ENCODE measurements at regions of chr13 and their contacts with region 1.

Region 1: DNA sequence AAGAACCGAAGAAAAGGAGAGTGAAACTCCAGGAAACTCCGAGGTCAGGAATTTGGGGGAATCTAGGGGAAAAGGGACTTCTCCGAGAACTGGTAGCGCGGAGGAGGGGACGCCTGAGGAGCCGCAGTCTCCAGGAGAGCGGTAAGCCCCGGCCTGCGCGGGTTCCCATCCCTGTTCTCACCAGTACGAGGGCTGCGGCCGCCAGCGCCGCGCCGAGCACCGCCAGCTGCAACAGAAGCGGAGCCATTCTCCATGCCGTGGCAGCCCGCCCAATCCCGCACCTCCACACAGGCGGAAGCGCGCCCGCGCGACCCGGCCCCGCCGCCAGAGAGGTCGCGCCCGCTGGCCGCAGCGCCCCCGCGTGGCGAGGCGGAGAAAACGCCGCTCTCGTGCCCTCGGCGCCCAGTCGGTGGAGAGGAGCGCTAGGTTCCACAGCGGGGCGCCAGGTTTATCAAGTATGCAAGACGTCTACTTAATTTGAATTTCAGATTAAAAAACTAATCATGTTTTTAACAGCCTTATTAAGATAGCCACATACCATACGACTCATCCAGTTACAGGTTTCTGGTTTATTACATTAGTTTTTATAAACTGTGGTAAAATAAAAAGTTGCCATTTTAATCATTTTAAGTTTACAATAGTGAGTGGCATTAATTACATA is at the start of gene ALG5:
- DNase-seq: peak; percentile 94
- ATAC-seq: peak; percentile 76
- H3K4me3 ChIP-seq: peak within 1 kb of the TSS; percentile 89 to 100 (median 97)
- H3K4me3 Mint-ChIP-seq: peak within 1 kb of the TSS; percentile 100
- H3K27ac ChIP-seq: peak within 1 kb of the TSS; percentile 97 to 98
- H3K27ac Mint-ChIP-seq: peak within 1 kb of the TSS; percentile 100
- H3K4me1 ChIP-seq: peaks cover 15 to 16% of the 10 kb centered on the region in 2 donors
- H3K4me1 Mint-ChIP-seq: peaks cover 38% of the 10 kb centered on the region
- H3K27me3 ChIP-seq: no peaks in the 10 kb centered on the region
- H3K27me3 Mint-ChIP-seq: no peaks in the 10 kb centered on the region
- CTCF ChIP-seq: peak; percentile 98
- total RNA-seq, gene ALG5: 16.4 and 21.0 TPM in 2 replicates

Region 2: GRCh38 chr13:38349390-38350113 is 1350.4 kb after region 1 on chr13 and contains the start of gene UFM1:
- CTCF ChIA-PET with region 1: interaction called, 4 read pairs
- POLR2A ChIA-PET with region 1: interaction called, 4 read pairs
- intact Hi-C with region 1: loop called (anchors 2 kb)
- DNase-seq: peak; percentile 95
- ATAC-seq: peak; percentile 96
- H3K4me3 ChIP-seq: peak within 1 kb of the TSS; percentile 74 to 98 (median 92)
- H3K4me3 Mint-ChIP-seq: peak within 1 kb of the TSS; percentile 99
- H3K27ac ChIP-seq: peak within 1 kb of the TSS; percentile 92 to 93
- H3K27ac Mint-ChIP-seq: peak within 1 kb of the TSS; percentile 98
- H3K4me1 ChIP-seq: peaks cover 21 to 22% of the 10 kb centered on the region in 2 donors
- H3K4me1 Mint-ChIP-seq: peaks cover 38% of the 10 kb centered on the region
- H3K27me3 ChIP-seq: no peaks in the 10 kb centered on the region
- H3K27me3 Mint-ChIP-seq: no peaks in the 10 kb centered on the region
- CTCF ChIP-seq: no peak
- total RNA-seq, gene UFM1: 61.6 and 66.4 TPM in 2 replicates